ENCODE measurements at regions of chr10 and their contacts with region 1.

Region 1: GRCh38 chr10:14598809-14599764 is 175.6 kb downstream of the FAM107B start:
- DNase-seq: peak in 1 of 2 donors; percentile 48
- H3K4me3 ChIP-seq: peak overlapping the region in 2 of 4 donors; percentile 8 to 9
- H3K27ac ChIP-seq: peak overlapping the region; percentile 37 to 89 (median 80)
- H3K4me1 ChIP-seq: peaks cover 21 to 78% (median 53%) of the 10 kb centered on the region in 4 donors
- H3K27me3 ChIP-seq: no peaks in the 10 kb centered on the region
- CTCF ChIP-seq: no peak
- EP300 ChIP-seq: no peak
- POLR2A ChIP-seq: no peak

Region 2: DNA sequence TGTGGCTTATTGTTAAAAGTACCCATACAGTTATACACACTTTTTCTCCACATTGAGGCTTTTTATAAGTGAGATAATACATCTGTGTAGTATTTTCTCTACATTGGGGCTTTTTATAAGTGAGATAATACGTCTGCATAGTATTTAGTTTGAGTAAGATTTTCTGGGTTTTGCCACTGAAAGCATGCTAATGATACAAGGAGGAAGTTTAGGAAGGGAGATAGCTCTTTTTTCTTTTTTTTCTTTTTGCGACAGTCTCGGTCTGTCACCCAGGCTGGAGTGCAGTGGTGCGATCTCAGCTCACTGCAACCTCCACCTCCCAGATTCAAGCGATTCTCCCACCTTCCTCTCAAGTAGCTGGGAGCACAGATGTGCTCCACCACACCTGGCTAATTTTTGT is 162.3 kb after region 1 on chr10:
- intact Hi-C with region 1: no loop called
- DNase-seq: no peak
- H3K4me3 ChIP-seq: no peak overlapping the region
- H3K27ac ChIP-seq: no peak overlapping the region
- H3K4me1 ChIP-seq: no peaks in the 10 kb centered on the region
- H3K27me3 ChIP-seq: no peaks in the 10 kb centered on the region
- CTCF ChIP-seq: no peak
- EP300 ChIP-seq: no peak
- POLR2A ChIP-seq: no peak

Region 3: DNA sequence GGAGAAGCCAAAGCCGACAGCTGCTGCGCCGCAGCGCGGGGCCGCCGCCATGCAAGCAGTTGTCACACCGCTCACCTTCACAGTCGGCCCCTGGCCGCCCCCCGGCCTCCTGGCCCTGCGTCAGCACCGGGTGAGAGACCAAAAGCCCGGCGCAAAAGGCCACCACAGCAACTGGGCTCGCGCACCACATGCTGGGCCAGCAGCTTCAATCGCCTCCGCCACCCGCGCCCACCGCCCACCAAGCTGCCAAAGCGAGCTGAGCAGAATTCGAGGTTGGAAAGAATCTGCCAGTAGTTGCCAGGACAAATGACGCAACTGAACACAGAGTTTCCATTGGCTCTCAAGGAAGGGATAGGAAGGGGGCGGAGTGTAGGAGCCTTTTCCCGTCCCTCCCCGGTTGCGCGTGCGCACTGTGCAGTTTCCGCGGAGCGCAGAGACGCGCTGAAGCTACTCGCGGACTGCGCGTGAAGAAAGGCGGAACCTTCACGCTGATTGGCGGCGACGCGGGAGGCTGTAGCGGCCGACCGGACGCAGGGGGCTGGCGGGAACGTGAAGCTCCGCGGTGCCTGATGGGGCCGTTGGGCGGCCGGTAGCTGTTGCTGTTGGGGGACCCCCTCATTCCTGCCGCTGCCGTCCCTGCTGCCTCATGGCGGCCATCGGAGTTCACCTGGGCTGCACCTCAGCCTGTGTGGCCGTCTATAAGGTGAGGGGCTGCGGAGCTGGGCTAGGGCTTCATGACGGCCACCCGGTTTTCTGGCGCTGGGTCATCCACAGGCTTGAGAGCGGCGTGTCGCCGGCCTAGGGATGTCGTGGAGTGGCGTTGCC is 238.9 kb after region 1 on chr10 and contains the starts of genes CDNF, HSPA14 and MSANTD7:
- intact Hi-C with region 1: loop called (anchors 10 kb)
- DNase-seq: peak; percentile 100
- H3K4me3 ChIP-seq: peak within 1 kb of the TSS; percentile 76 to 96 (median 94)
- H3K27ac ChIP-seq: peak within 1 kb of the TSS; percentile 95 to 99 (median 98)
- H3K4me1 ChIP-seq: peaks cover 7 to 30% (median 23%) of the 10 kb centered on the region in 4 donors
- H3K27me3 ChIP-seq: no peaks in the 10 kb centered on the region
- CTCF ChIP-seq: peak in 1 of 7 experiments; percentile 6
- EP300 ChIP-seq: peak; percentile 6
- POLR2A ChIP-seq: peak in 2 of 4 donors; percentile 47 to 73
- total RNA-seq, gene CDNF: 4.2 to 212 TPM in 2 of 5 donors, not detected in the others
- total RNA-seq, gene HSPA14: 1.2 to 25.9 (median 19.3) TPM in 4 of 5 donors, not detected in the other
- total RNA-seq, gene MSANTD7: under 0.01 to 84.8 (median 14.5) TPM

Measured in stomach (tissue), 19 donors.